HEK293 (cell line): ENCODE measurements at regions of chr12 and their contacts with region 1.

Region 1: GRCh38 chr12:57822392-57823130 is 4.0 kb upstream of the AVIL start:
- H3K4me3 ChIP-seq: no peak overlapping the region
- H3K27ac ChIP-seq: no peak overlapping the region
- H3K4me1 ChIP-seq: no peaks in the 10 kb centered on the region
- CTCF ChIP-seq: no peak

Region 2: DNA sequence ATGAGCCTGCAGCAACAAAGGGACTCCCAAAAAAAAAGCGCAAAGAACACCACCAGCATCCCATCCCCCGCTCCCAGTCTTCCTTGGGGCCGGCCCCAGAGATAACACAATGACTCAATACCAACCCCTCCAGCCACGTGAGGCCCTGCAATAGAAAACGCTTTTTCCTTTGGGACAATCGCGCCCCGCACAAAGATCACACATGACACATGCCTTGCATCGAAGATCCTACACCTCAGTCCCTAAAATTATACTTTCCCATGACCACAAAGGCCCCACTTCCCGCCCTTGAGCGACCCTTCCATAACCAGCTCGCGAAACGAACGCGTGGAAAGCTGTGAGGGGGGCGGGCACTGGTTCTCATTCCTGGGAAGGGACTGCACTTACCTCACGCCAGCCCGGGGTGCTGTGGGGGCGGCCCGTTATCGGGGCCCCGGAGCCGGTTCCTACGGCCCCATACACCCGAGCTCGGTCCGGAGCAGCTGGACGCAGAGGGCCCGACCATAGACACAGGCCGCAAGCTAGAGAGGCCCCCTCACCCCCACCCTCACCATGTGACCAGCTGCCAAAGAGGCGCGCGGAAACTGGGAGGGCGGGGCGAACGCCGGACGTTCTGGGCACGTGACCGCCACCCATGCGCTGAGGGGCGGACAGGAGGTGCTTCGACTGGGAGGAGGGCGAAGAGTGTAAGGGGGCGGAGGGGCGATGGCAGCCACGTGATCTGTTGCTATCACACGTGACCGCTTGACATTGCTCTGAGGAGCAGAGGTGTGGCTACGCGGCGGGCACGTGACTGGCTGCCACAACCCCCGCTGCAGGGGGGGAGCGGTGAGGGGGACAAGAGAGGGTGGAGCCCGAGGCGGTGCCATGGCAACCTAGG is 70.5 kb before region 1 on chr12 and contains the start of gene CDK4:
- CTCF ChIA-PET with region 1: no interaction called
- POLR2A ChIA-PET with region 1: no interaction called
- H3K4me3 ChIP-seq: peak within 1 kb of the TSS; percentile 83
- H3K27ac ChIP-seq: peak within 1 kb of the TSS; percentile 84
- H3K4me1 ChIP-seq: peaks cover 16% of the 10 kb centered on the region
- CTCF ChIP-seq: no peak; the same call in 1 of the 2 replicates

Region 3: DNA sequence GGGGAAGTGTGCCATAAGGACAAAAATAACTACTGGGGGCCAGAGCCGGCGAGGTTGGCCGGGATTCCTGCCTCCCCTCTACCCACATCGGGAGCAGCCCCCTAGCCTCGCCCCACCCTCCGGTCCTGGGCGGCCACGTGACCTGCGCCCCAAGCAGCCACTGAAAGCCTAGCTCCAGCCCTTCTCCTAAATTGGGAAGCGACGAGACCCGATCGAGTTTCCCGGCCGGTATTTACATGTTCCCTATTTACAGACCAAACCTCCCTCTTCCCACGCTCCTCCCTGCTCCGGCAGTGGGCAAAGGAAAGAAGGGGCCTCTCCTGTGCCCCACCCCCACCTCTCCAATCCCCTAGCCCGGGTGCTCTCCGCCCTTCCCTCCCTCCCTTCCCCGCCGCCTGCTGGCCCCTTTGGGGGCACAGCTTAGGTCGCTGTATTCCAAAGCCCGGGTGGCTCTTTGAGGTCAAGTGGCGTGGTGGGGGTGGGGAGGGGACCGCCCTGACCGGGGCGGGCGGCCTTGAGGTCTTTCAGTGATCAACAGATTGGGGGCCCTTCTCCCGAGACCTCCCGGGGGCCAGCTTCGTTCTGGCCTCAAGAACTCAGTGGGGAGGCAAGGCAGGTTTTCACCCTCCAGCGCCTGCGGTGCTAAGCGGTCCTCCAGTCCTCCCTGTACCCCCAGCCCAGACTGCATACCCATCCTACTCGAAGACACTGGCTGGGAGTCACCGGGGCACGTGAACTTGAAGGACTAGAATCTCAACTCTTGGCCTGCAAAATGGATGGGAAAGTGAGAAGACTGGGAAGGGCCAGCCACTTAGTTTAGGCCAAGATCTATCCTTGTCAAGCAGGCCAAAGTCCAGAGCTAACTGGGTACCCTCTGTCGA is 30.3 kb after region 1 on chr12:
- CTCF ChIA-PET with region 1: no interaction called
- POLR2A ChIA-PET with region 1: no interaction called
- H3K4me3 ChIP-seq: no peak overlapping the region
- H3K27ac ChIP-seq: no peak overlapping the region
- H3K4me1 ChIP-seq: no peaks in the 10 kb centered on the region
- CTCF ChIP-seq: no peak

Region 4: GRCh38 chr12:57935839-57936512 is 113.4 kb after region 1 on chr12:
- CTCF ChIA-PET with region 1: no interaction called
- POLR2A ChIA-PET with region 1: interaction called, 10 read pairs
- H3K4me3 ChIP-seq: peak overlapping the region; percentile 77
- H3K27ac ChIP-seq: peak overlapping the region; percentile 12; the same call in 1 of the 2 replicates
- H3K4me1 ChIP-seq: 0 out of 2 replicates have a peak, but pooled peaks cover 2% of the 10 kb centered on the region
- CTCF ChIP-seq: no peak

Region 5: GRCh38 chr12:57965766-57966165 is 143.2 kb after region 1 on chr12:
- CTCF ChIA-PET with region 1: no interaction called
- POLR2A ChIA-PET with region 1: no interaction called
- H3K4me3 ChIP-seq: no peak overlapping the region
- H3K27ac ChIP-seq: no peak overlapping the region
- H3K4me1 ChIP-seq: no peaks in the 10 kb centered on the region
- CTCF ChIP-seq: no peak